GM12878 (cell line): ENCODE measurements at regions of chr10 and their contacts with region 1.

Region 1: DNA sequence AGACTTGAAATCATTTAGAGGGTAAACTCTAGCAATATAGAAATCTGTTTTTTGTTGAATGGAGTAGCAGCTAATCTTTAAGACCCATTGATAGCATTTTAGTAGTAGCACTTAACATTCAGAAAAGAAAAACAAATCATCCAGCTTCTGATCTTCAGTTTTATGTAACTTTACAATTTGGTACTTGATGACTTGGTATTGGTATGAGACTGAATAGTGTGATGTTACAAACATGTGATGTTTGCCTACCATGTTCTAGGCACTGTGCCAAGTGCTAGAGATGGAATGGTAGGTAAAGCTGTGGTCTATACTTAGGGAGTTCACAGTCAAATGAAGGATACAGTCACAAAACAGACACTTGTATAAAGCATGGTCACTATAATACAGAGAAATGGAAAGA is 21.3 kb downstream of the ZEB1 start:
- DNase-seq: no peak
- ATAC-seq: peak; percentile 36
- H3K4me3 ChIP-seq: no peak overlapping the region; the same call in 1 of the 2 replicates
- H3K27ac ChIP-seq: peak overlapping the region; percentile 43; the same call in 1 of the 2 replicates
- H3K4me1 ChIP-seq: peaks cover 25% of the 10 kb centered on the region
- H3K27me3 ChIP-seq: no peaks in the 10 kb centered on the region
- CTCF ChIP-seq: no peak
- EP300 ChIP-seq: no peak
- POLR2A ChIP-seq: no peak
- RAD21 ChIP-seq: no peak

Region 2: DNA sequence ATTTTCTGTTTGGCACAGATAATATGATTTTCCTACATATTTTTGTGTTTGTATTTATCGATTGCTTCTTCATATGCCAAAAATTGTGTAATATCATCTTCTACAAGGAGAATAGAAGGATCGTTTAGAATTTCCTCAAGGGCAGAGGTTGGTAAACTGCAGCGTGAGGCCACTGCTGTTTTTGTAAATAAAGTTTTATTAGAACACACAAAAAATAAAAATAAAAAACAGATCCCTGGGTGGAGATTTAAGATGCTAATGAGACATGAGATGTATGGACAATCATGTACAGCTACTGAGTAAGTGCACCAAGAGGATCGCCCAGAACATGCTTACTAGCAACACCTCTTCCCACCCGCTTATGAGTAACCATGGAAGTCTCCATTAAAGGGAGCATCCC is 720.4 kb before region 1 on chr10:
- CTCF ChIA-PET with region 1: no interaction called
- POLR2A ChIA-PET with region 1: no interaction called
- RAD21 ChIA-PET with region 1: no interaction called
- SMC1A ChIA-PET with region 1: no interaction called
- in situ Hi-C with region 1: no loop called
- intact Hi-C with region 1: no loop called
- DNase-seq: no peak
- ATAC-seq: no peak
- H3K4me3 ChIP-seq: no peak overlapping the region
- H3K27ac ChIP-seq: no peak overlapping the region
- H3K4me1 ChIP-seq: no peaks in the 10 kb centered on the region
- H3K27me3 ChIP-seq: no peaks in the 10 kb centered on the region; a peak in 3 of 4 replicates
- CTCF ChIP-seq: no peak
- EP300 ChIP-seq: no peak
- POLR2A ChIP-seq: no peak
- RAD21 ChIP-seq: no peak

Region 3: GRCh38 chr10:31353574-31353973 is 13.2 kb after region 1 on chr10:
- CTCF ChIA-PET with region 1: interaction called, 20 read pairs
- POLR2A ChIA-PET with region 1: interaction called, 4 read pairs
- RAD21 ChIA-PET with region 1: interaction called, 5 read pairs
- SMC1A ChIA-PET with region 1: interaction called, 94 read pairs
- in situ Hi-C with region 1: no loop called
- intact Hi-C with region 1: no loop called
- DNase-seq: peak; percentile 73
- ATAC-seq: peak; percentile 90
- H3K4me3 ChIP-seq: no peak overlapping the region
- H3K27ac ChIP-seq: no peak overlapping the region; the same call in 1 of the 2 replicates
- H3K4me1 ChIP-seq: peaks cover 25% of the 10 kb centered on the region
- H3K27me3 ChIP-seq: no peaks in the 10 kb centered on the region
- CTCF ChIP-seq: peak; percentile 31 to 55 (median 33); a peak in 4 of 6 replicates
- EP300 ChIP-seq: peak; percentile 61 to 66; a peak in 2 of 4 replicates
- POLR2A ChIP-seq: no peak
- RAD21 ChIP-seq: peak; percentile 57

Region 4: GRCh38 chr10:31515819-31516402 is 175.6 kb after region 1 on chr10:
- CTCF ChIA-PET with region 1: no interaction called
- POLR2A ChIA-PET with region 1: no interaction called
- RAD21 ChIA-PET with region 1: no interaction called
- SMC1A ChIA-PET with region 1: no interaction called
- in situ Hi-C with region 1: no loop called
- intact Hi-C with region 1: no loop called
- DNase-seq: no peak
- ATAC-seq: no peak
- H3K4me3 ChIP-seq: no peak overlapping the region
- H3K27ac ChIP-seq: no peak overlapping the region
- H3K4me1 ChIP-seq: no peaks in the 10 kb centered on the region
- H3K27me3 ChIP-seq: no peaks in the 10 kb centered on the region
- CTCF ChIP-seq: no peak
- EP300 ChIP-seq: no peak
- POLR2A ChIP-seq: no peak
- RAD21 ChIP-seq: no peak

Region 5: DNA sequence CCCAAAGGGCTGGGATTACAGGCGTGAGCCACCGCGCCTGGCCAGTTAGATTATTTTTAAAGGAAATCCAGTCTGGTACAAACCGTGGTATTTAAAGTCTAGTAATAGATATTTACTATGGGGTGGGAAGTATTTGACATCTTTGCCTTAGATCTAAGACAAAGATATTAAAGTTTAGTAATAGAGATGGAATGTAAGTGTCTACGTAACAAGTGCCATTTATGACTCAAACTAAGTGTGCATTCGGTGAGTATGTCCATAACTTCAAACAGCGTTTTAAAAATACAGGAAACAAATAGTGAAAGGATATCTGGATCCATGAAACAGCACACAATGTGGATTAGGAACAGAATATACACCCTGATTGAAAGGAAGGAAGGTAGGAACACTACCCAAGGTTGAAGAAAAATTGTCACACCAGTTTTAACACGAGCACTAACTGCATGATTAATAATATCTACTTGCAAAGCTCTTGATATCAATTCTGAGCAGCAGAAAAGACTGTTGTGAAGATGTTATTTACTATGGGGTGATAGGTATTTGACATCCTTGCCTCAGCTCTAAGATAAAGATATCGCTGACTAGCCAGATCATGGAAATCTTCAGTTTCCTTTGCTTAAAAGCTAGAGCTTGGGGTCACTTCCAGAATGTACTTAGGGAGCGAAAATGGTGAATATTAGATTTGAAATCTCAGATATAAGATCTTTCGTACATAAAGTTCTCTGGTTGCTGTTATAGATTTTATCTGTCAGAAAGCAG is 957.9 kb after region 1 on chr10:
- CTCF ChIA-PET with region 1: no interaction called
- POLR2A ChIA-PET with region 1: no interaction called
- RAD21 ChIA-PET with region 1: no interaction called
- SMC1A ChIA-PET with region 1: no interaction called
- in situ Hi-C with region 1: no loop called
- intact Hi-C with region 1: no loop called
- DNase-seq: no peak
- ATAC-seq: no peak
- H3K4me3 ChIP-seq: no peak overlapping the region
- H3K27ac ChIP-seq: no peak overlapping the region
- H3K4me1 ChIP-seq: no peaks in the 10 kb centered on the region
- H3K27me3 ChIP-seq: no peaks in the 10 kb centered on the region
- CTCF ChIP-seq: no peak
- EP300 ChIP-seq: no peak
- POLR2A ChIP-seq: no peak
- RAD21 ChIP-seq: no peak